Aorta (tissue), 5 donors: ENCODE measurements at regions of chr1 and their contacts with region 1.

Region 1: GRCh38 chr1:179091691-179092165 is 9.9 kb downstream of the TOR3A start:
- DNase-seq: peak in 1 of 2 donors; percentile 74
- ATAC-seq: peak; percentile 50
- H3K4me3 ChIP-seq: no peak overlapping the region
- H3K27ac ChIP-seq: peak overlapping the region in 1 of 2 donors; percentile 66
- H3K4me1 ChIP-seq: no peaks in the 10 kb centered on the region
- H3K27me3 ChIP-seq: no peaks in the 10 kb centered on the region

Region 2: GRCh38 chr1:179190861-179191260 is 99.1 kb after region 1 on chr1:
- intact Hi-C with region 1: loop called in 1 of 2 experiments (anchors 5 kb)
- DNase-seq: no peak
- ATAC-seq: peak; percentile 72
- H3K4me3 ChIP-seq: no peak overlapping the region
- H3K27ac ChIP-seq: no peak overlapping the region
- H3K4me1 ChIP-seq: no peaks in the 10 kb centered on the region
- H3K27me3 ChIP-seq: no peaks in the 10 kb centered on the region